Heart right ventricle (tissue), 16 donors: ENCODE measurements at regions of chr1 and their contacts with region 1.

Region 1: DNA sequence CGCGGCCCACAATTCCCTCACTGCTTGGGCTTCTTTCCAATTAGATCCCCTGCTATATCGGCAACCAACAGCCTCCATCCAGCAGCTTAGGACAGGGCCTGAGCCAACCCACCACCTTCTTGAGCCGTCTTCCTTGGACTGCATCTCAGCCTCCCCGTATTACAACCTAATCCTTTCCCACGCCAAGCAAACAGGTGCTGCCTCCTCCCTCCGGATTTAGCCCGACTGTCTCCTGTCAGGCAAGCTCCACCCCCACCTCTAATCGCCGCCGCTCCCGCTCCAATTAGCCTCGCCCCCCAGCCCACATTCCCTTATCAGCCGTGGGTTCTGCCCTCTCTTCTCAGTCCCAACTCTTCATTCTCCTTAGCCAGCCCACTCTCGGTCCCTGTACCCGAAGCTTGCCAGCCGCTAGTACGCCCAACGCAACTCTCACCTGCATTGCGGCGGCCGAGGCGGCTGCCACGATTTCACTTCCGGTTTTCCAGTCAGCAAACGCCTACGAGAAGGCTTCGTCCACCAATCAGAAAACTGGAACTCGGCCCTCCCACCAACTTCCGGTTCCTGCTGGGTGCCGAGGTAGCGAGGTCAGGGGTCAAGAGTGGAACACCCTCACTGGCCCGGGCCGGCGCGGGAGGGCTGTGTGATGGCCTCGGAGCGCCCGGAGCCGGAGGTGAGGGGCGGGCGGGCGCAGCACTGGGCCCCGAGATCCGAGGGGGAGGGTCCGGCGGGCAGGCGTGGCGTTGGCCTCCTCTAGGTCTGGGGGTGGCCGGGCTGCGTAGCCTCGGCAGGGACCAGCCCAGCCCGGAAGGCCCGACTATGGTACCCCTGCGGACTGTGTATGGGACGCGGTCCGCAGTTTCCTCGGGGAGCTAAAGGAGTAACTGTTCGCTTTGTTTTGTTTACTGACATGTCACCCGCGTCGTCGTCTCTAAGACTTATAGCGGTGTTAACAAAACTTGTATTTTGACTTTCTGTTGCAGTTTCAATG is at the starts of genes MED8 and SZT2:
- DNase-seq: peak; percentile 93 to 97
- ATAC-seq: peak; percentile 97 to 99 (median 99)
- H3K4me3 ChIP-seq: peak within 1 kb of the TSS; percentile 68 to 94 (median 78)
- H3K27ac ChIP-seq: peak within 1 kb of the TSS; percentile 52 to 94 (median 88)
- H3K4me1 ChIP-seq: peaks cover 9 to 36% (median 28%) of the 10 kb centered on the region in 9 donors
- H3K27me3 ChIP-seq: no peaks in the 10 kb centered on the region
- CTCF ChIP-seq: no peak
- total RNA-seq, gene MED8: 10.5 to 22.5 (median 13.9) TPM
- total RNA-seq, gene SZT2: 20.5 to 38.3 (median 26.0) TPM

Region 2: DNA sequence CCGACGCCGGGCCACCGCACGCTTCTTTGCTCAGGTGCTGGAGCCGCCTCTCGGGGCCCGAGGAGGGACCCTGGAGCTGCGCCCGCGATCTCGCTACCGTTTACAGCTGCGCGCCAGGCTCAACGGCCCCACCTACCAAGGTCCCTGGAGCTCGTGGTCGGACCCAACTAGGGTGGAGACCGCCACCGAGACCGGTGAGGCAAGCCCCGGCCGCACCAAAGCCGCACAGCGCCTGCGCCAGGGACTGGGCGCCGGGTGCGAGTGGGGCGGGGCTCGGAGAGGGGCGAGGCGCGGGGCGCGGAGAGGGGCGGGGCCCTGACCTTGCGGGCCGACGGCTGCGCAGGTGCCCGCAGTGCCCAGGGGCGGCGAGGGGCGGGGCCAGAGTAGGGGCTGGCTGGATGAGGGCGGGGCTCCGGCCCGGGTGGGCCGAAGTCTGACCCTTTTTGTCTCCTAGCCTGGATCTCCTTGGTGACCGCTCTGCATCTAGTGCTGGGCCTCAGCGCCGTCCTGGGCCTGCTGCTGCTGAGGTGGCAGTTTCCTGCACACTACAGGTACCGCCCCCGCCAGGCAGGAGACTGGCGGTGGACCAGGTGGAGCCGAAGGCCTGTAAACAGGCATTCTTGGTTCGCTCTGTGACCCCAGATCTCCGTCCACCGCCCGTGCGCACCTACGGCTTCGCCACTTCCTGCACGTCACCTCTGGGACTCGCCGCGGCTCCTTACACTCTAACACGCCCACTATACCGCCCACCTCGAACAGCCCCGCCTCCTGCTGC is 40.6 kb before region 1 on chr1:
- intact Hi-C with region 1: no loop called
- DNase-seq: peak; percentile 87
- ATAC-seq: peak; percentile 84 to 95 (median 90)
- H3K4me3 ChIP-seq: peak overlapping the region; percentile 8 to 67 (median 59)
- H3K27ac ChIP-seq: peak overlapping the region; percentile 85 to 98 (median 91)
- H3K4me1 ChIP-seq: peaks cover 4 to 57% (median 22%) of the 10 kb centered on the region in 9 donors
- H3K27me3 ChIP-seq: no peaks in the 10 kb centered on the region
- CTCF ChIP-seq: peak in 1 of 9 donors; percentile 11

Region 3: DNA sequence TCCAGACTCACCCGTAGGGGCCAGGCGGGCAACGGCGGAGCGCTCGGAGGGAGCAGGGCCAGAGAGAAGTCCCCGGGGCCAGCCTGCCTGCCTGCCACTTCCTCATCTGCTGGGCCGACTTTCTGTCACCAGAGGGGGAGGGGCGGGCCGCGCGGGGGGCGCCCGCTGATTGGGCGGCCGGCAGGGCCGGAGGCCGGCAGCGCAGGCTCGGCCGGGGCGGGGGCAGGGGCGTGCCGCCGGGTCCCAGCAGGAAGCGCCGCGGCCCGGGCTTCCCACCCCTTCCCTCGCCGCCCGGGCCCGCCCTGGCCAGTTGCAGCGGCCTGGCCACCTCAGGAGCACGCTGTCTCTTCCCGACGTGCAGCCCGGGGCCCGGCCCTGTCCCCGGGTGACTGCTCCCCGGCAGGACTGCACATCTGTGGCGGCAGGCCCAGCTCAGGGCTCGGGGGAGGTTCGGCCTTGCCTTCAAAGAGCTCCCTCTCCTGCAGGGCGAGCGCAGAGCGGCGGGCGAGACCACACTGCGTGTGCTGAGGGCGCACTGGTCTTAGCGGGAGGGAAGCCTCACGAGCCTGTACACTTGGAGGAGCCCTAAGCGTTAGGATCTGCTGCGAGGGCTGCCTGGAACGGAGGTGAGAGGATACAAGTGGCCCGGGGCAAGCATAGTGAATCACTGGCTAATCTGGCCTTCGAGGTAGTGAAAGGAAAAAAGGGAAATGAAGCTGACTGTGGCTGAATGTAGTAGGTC is 21.5 kb before region 1 on chr1 and contains the start of gene ELOVL1:
- intact Hi-C with region 1: loop called in 1 of 10 experiments (anchors 1 kb)
- DNase-seq: peak; percentile 94 to 95
- ATAC-seq: peak; percentile 94 to 97 (median 95)
- H3K4me3 ChIP-seq: peak within 1 kb of the TSS; percentile 64 to 96 (median 88)
- H3K27ac ChIP-seq: peak within 1 kb of the TSS; percentile 89 to 99 (median 98)
- H3K4me1 ChIP-seq: peaks cover 18 to 50% (median 32%) of the 10 kb centered on the region in 9 donors
- H3K27me3 ChIP-seq: no peaks in the 10 kb centered on the region
- CTCF ChIP-seq: peak in 5 of 9 donors; percentile 12 to 60 (median 48)
- total RNA-seq, gene ELOVL1: 18.4 to 49.3 (median 28.3) TPM

Region 4: GRCh38 chr1:43444836-43445235 is 55.2 kb after region 1 on chr1:
- intact Hi-C with region 1: no loop called
- DNase-seq: no peak
- ATAC-seq: peak in 1 of 8 donors; percentile 34
- H3K4me3 ChIP-seq: no peak overlapping the region
- H3K27ac ChIP-seq: no peak overlapping the region
- H3K4me1 ChIP-seq: peaks cover 0 to 19% (median 0%) of the 10 kb centered on the region in 9 donors
- H3K27me3 ChIP-seq: no peaks in the 10 kb centered on the region
- CTCF ChIP-seq: no peak

Region 5: DNA sequence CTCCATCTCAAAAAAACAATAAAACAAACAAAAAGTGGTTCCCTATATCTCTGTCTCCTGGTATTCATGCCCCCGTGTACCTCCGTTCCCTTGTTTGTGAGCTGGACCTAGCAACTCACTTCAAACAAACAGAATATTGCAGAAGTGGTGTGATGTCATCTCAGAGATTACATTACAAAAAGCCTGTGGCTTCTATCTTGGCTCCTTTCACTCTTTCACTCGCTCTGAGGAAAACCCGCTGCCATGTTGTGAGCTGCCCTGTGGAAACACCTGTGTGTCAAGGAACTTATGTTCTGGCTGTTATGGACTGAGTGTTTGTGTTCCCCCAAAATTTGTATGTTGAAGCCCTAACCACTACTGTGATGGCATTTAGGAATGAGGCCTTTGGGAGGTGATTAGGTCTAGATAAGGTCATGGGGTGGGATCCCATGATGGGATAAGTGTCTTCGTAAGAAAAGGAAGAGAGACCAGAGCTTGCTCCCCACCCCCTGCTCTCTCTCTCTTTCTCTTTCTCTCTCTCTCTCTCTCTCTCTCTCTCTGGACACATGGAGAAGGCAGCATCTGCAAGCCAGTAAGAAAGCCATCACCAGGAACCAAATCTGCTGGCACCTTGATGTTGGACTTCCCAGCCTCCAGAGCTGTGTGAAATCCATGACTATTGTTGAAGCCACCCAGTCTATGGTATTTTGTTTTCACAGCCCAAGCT is 71.5 kb after region 1 on chr1:
- intact Hi-C with region 1: no loop called
- DNase-seq: no peak
- ATAC-seq: peak in 1 of 8 donors; percentile 8
- H3K4me3 ChIP-seq: no peak overlapping the region
- H3K27ac ChIP-seq: no peak overlapping the region
- H3K4me1 ChIP-seq: no peaks in the 10 kb centered on the region
- H3K27me3 ChIP-seq: no peaks in the 10 kb centered on the region
- CTCF ChIP-seq: no peak